ENCODE measurements at regions of chr1 and their contacts with region 1.

Region 1: DNA sequence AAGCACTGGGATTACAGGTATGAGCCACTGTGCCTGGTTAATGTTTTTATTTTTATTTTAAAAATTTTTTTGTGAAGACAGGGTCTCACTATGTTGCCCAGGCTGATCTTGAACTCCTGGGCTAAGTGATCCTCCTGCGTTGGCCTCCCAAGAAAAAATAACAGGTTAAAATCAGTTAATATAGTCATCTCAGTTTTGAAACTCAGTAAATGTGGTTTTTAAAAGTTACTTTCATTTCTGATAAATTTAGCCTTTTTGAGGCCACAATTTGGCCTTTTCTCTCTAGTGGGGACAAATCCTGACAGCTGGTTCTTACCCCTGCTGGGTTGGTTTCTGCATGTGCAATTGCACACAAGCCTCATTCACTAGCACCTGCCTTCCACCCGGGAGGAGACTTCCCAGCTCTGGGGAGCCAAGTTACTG is 13.3 kb downstream of the PMF1 start:
- DNase-seq: no peak
- H3K4me3 ChIP-seq: no peak overlapping the region
- H3K27ac ChIP-seq: peak overlapping the region in 2 of 5 donors; percentile 5 to 15
- H3K4me1 ChIP-seq: peaks cover 0 to 25% (median 10%) of the 10 kb centered on the region in 4 donors
- H3K27me3 ChIP-seq: no peaks in the 10 kb centered on the region
- CTCF ChIP-seq: no peak
- EP300 ChIP-seq: no peak
- POLR2A ChIP-seq: no peak

Region 2: GRCh38 chr1:155970531-155971167 is 255.5 kb before region 1 on chr1:
- intact Hi-C with region 1: no loop called
- DNase-seq: peak; percentile 51 to 56
- H3K4me3 ChIP-seq: no peak overlapping the region
- H3K27ac ChIP-seq: peak overlapping the region; percentile 5 to 98 (median 81)
- H3K4me1 ChIP-seq: peaks cover 81 to 100% (median 93%) of the 10 kb centered on the region in 4 donors
- H3K27me3 ChIP-seq: no peaks in the 10 kb centered on the region
- CTCF ChIP-seq: no peak
- EP300 ChIP-seq: no peak
- POLR2A ChIP-seq: no peak

Region 3: GRCh38 chr1:156090822-156091188 is 135.3 kb before region 1 on chr1:
- intact Hi-C with region 1: loop called (anchors 5 kb)
- DNase-seq: peak; percentile 94 to 95
- H3K4me3 ChIP-seq: no peak overlapping the region
- H3K27ac ChIP-seq: no peak overlapping the region
- H3K4me1 ChIP-seq: peaks cover 0 to 20% (median 5%) of the 10 kb centered on the region in 4 donors
- H3K27me3 ChIP-seq: no peaks in the 10 kb centered on the region
- CTCF ChIP-seq: peak in 5 of 7 experiments; percentile 59 to 90 (median 86)
- EP300 ChIP-seq: no peak
- POLR2A ChIP-seq: no peak

Region 4: DNA sequence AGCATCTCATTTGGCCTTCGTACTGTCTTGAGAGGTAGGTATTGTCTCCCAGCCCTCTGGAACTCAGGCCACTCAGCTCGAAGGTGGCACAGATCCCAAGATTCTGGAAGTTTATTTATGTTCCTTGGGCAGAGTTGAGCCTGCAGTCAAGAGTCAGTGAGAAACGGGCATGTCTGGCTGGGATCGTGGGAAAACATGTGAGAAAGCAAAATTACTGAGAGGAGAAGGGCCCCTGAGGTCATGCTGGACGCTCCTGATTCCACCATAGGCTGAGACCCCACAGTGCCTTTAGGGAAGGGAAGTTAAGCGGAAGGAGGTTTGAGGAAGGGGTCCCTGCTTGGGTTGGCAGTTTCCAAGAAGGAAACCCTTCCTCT is 85.3 kb before region 1 on chr1:
- intact Hi-C with region 1: loop called (anchors 5 kb)
- DNase-seq: no peak
- H3K4me3 ChIP-seq: no peak overlapping the region
- H3K27ac ChIP-seq: peak overlapping the region in 3 of 5 donors; percentile 42 to 76 (median 43)
- H3K4me1 ChIP-seq: peaks cover 0 to 39% (median 22%) of the 10 kb centered on the region in 4 donors
- H3K27me3 ChIP-seq: no peaks in the 10 kb centered on the region
- CTCF ChIP-seq: no peak
- EP300 ChIP-seq: no peak
- POLR2A ChIP-seq: no peak

Measured in stomach (tissue), 19 donors.